ENCODE measurements at regions of chr6 and their contacts with region 1.

Region 1: DNA sequence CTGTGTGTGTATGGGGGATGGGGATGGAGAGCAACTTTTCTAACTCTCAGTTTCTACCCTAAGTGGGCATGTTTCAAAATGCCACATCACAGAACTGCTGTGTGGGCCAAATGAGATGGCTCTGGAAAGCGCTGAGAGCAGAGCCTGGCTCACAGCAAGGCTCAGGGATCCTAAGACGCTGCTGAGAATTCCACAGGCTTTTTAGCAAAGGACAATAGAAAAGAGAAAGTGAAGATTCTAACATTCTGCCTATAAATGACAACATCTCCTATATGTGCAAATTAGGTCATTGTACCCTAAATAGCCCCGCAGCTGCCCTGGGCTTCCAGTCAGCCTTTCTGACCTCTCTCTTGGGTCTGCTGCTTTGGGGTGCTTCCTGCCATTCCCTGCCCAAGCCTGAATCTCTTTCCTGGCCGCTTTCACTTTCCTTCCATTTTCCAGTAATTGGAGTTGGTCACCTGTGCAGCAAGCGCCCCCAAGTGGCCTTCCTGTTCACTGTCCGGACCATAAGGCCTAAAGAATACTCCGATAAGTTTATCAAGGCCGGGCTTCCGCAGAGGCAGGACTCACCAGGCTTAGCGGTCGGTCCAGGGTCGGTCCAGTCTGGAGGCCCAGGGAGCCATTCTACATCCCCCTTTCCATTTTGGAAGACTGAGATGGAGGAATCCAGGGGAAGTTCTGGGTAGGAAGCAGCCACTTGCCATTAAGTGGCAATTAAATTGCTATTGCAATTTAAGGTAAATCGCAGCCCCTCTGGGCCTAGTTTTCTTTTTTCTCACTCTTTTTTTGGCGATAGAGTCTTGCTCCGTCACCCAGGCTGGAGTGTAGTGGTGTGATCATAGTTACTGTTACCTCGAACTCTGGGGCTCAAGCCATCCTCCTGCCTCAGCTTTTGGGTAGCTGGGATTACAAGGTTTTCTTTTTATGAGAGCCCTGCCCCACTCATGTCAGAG is 6.6 kb upstream of the DDR1 start:
- DNase-seq: peak; percentile 83
- H3K4me3 ChIP-seq: peak overlapping the region; percentile 21 to 23
- H3K27ac ChIP-seq: peak overlapping the region; percentile 73 to 87
- H3K4me1 ChIP-seq: peaks cover 7 to 17% of the 10 kb centered on the region in 2 experiments; a peak in 2 of 4 replicates
- H3K27me3 ChIP-seq: no peaks in the 10 kb centered on the region
- CTCF ChIP-seq: peak; percentile 94
- EP300 ChIP-seq: no peak
- RAD21 ChIP-seq: peak; percentile 95

Region 2: DNA sequence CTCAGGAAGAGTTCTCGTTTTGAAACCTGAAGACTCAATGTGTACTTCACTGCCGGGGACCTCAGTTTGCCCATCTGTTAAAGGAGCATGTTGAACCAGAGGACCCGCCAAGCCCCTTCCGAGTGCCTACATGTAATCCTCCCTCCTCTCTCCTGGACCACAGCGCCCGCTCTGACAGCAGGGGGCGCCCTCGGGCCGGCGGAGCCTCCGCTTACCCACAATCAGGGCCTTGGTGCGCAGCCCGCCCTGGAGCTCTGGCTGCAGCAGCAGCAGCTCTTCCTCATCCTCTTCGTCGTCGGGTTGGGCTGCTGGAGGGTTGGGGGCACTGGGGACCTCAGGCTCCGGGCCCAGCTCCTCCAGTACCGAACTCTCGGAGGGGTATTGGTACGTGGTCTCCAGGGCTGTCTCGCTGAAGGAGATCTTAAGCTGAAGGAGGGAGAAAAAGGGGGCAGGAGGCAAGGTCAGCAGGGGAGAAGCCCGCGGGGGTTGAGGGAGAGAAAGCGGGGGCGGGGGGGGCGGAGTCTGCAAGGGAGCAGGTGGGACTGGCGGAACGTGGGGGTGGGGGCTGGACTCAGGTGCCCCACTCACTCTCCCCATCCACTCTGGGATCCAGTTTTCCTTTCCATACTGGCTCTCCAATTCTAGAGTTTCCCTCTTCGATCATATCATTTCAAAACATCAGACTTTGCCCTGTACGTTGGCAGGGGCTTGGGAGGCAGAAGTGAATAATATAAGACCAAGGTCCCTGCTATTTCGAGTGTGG is 198.6 kb before region 1 on chr6:
- CTCF ChIA-PET with region 1: interaction called, 26 read pairs
- POLR2A ChIA-PET with region 1: no interaction called
- DNase-seq: peak; percentile 90
- H3K4me3 ChIP-seq: peak overlapping the region in 1 of 2 experiments; percentile 32; a peak in 1 of 4 replicates
- H3K27ac ChIP-seq: peak overlapping the region in 1 of 2 experiments; percentile 16; a peak in 2 of 4 replicates
- H3K4me1 ChIP-seq: peaks cover 16 to 38% of the 10 kb centered on the region in 2 experiments; a peak in 3 of 4 replicates
- H3K27me3 ChIP-seq: no peaks in the 10 kb centered on the region
- CTCF ChIP-seq: peak; percentile 92
- EP300 ChIP-seq: no peak
- RAD21 ChIP-seq: peak; percentile 88

Region 3: DNA sequence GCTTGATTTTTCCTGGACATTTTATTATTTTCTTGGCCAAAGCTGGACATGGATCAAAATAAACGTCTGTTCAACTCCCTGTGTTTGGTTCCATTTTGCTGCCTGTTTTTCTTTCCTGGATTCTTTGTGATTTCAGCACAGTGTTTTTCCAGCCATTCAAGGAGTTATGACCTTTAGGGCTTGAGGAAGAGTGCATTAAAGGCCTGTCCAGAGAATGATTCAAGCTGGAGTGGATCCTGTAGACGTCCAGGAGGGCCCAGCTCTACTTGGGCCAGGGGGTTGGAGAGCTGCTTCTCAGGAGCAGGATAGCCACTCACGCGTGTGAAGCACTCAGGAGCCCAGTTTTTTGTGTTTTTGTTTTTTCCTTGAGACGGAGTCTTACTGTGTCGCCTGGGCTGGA is 76.8 kb before region 1 on chr6:
- CTCF ChIA-PET with region 1: no interaction called
- POLR2A ChIA-PET with region 1: no interaction called
- DNase-seq: no peak
- H3K4me3 ChIP-seq: no peak overlapping the region
- H3K27ac ChIP-seq: peak overlapping the region in 1 of 2 experiments; percentile 42; a peak in 1 of 4 replicates
- H3K4me1 ChIP-seq: peaks cover 0 to 4% of the 10 kb centered on the region in 2 experiments; a peak in 1 of 4 replicates
- H3K27me3 ChIP-seq: no peaks in the 10 kb centered on the region
- CTCF ChIP-seq: no peak
- EP300 ChIP-seq: no peak
- RAD21 ChIP-seq: no peak

Region 4: DNA sequence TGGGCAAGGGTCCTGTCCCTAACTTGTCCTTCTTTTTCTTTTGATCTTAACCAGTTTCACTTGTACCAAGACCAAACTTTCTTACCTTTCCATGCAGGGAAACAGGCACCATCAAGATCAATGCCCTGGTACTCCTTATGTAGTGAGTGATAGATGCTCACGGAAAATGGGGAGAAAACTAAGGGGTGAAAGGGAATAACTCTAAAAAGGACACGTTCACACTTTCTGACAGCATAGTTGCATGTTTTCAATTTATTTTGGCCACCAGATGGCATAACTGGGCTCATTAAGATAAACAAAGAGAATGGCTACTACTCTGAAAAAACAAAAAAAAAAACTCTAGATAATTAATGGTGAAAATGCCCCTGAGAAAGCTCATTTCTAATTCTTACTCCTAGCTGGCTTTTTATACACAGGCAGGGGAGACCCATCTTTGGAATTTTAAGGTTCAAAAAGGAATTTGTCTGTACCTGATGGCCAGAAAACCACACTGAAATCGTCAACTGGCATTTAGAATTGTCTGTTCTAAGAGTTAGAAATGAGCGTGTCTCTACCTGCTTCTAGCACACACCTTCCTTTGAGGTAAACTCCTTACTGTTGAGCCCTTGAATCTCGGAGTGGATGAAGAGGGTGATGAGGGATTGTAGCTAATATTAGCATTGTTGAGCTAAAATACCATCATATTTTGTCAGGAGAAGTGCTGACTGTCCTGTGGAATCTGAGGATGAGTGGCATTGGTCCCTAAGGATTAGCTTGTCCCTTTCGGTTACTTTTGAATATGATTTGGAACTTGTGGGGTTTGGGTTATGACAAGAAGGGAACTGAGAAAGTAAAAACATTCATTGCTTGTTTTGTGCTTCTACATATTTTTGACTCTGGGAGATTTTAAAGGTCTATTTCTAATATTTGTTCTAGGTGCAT is 55.6 kb before region 1 on chr6:
- CTCF ChIA-PET with region 1: interaction called, 103 read pairs
- POLR2A ChIA-PET with region 1: no interaction called
- DNase-seq: peak; percentile 45
- H3K4me3 ChIP-seq: no peak overlapping the region
- H3K27ac ChIP-seq: no peak overlapping the region; a peak in 1 of 4 replicates
- H3K4me1 ChIP-seq: peaks cover 0 to 28% of the 10 kb centered on the region in 2 experiments; a peak in 2 of 4 replicates
- H3K27me3 ChIP-seq: no peaks in the 10 kb centered on the region
- CTCF ChIP-seq: peak; percentile 68
- EP300 ChIP-seq: no peak
- RAD21 ChIP-seq: peak; percentile 47

Region 5: GRCh38 chr6:30828027-30828960 is 49.4 kb before region 1 on chr6:
- CTCF ChIA-PET with region 1: interaction called, 103 read pairs
- POLR2A ChIA-PET with region 1: no interaction called
- DNase-seq: peak; percentile 80
- H3K4me3 ChIP-seq: no peak overlapping the region
- H3K27ac ChIP-seq: peak overlapping the region in 1 of 2 experiments; percentile 38; a peak in 1 of 4 replicates
- H3K4me1 ChIP-seq: peaks cover 7 to 12% of the 10 kb centered on the region in 2 experiments; a peak in 3 of 4 replicates
- H3K27me3 ChIP-seq: no peaks in the 10 kb centered on the region
- CTCF ChIP-seq: peak; percentile 97
- EP300 ChIP-seq: no peak
- RAD21 ChIP-seq: peak; percentile 97

Region 6: GRCh38 chr6:30844091-30844535 is 33.6 kb before region 1 on chr6:
- CTCF ChIA-PET with region 1: interaction called, 10 read pairs
- POLR2A ChIA-PET with region 1: interaction called, 3 read pairs
- DNase-seq: no peak
- H3K4me3 ChIP-seq: no peak overlapping the region
- H3K27ac ChIP-seq: no peak overlapping the region; a peak in 1 of 4 replicates
- H3K4me1 ChIP-seq: peaks cover 2 to 9% of the 10 kb centered on the region in 2 experiments; a peak in 2 of 4 replicates
- H3K27me3 ChIP-seq: no peaks in the 10 kb centered on the region
- CTCF ChIP-seq: no peak
- EP300 ChIP-seq: no peak
- RAD21 ChIP-seq: no peak

Region 7: GRCh38 chr6:30862156-30862875 is 15.4 kb before region 1 on chr6:
- CTCF ChIA-PET with region 1: interaction called, 10 read pairs
- POLR2A ChIA-PET with region 1: no interaction called
- DNase-seq: no peak
- H3K4me3 ChIP-seq: no peak overlapping the region
- H3K27ac ChIP-seq: no peak overlapping the region
- H3K4me1 ChIP-seq: no peaks in the 10 kb centered on the region
- H3K27me3 ChIP-seq: no peaks in the 10 kb centered on the region
- CTCF ChIP-seq: no peak
- EP300 ChIP-seq: no peak
- RAD21 ChIP-seq: no peak